Activated CD8-positive, alpha-beta memory T cell treated with anti-CD3 and anti-CD28 coated beads, Interleukin-2, amount 10 ng/mL, durations not matched to agents 7 days and 5 days (primary cell): ENCODE measurements at regions of chr1 and their contacts with region 1.

Region 1: DNA sequence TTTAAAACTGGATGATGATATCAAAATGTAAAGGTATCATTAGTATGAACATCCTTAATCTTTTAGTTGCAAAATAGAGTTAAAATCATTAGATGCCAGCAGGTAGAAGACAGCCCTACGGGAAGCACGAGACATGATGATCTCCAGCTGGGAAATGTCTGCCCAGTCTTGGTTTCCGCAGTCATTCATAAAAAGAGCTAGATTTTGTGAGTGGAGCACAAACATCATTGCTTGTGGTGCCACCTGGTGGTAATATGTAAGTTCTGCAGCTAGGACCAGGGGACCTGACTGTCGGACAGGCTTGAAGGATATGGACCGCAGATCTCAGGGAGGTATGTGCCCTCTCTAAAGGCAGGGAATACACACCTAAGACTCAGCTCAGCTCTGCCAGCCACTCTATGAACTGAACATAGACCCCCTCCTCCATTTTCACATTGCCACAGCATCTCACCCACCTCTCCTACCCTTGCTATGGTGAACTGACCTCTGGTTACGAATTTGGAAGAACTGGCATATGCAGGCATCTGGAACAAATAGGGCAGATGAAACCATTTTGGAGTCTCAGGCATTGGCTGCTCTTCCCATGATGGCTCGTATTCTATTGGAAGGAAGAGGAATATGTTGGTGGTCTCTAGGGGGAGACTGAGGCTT is 9.2 kb downstream of the FCMR start:
- DNase-seq: peak; percentile 79
- ATAC-seq: peak; percentile 53
- H3K4me3 Mint-ChIP-seq: no peak overlapping the region
- H3K27ac Mint-ChIP-seq: no peak overlapping the region
- H3K4me1 Mint-ChIP-seq: peaks cover 40% of the 10 kb centered on the region
- H3K27me3 Mint-ChIP-seq: peaks cover 4% of the 10 kb centered on the region

Region 2: GRCh38 chr1:206725109-206725963 is 187.2 kb before region 1 on chr1:
- CTCF ChIA-PET with region 1: interaction called, 65 read pairs
- DNase-seq: peak; percentile 77
- ATAC-seq: peak; percentile 65
- H3K4me3 Mint-ChIP-seq: no peak overlapping the region
- H3K27ac Mint-ChIP-seq: peak overlapping the region; percentile 24
- H3K4me1 Mint-ChIP-seq: peaks cover 59% of the 10 kb centered on the region
- H3K27me3 Mint-ChIP-seq: no peaks in the 10 kb centered on the region

Region 3: GRCh38 chr1:206808615-206809014 is 104.0 kb before region 1 on chr1:
- CTCF ChIA-PET with region 1: interaction called, 145 read pairs
- DNase-seq: peak; percentile 72
- ATAC-seq: peak; percentile 89
- H3K4me3 Mint-ChIP-seq: no peak overlapping the region
- H3K27ac Mint-ChIP-seq: peak overlapping the region; percentile 18
- H3K4me1 Mint-ChIP-seq: peaks cover 55% of the 10 kb centered on the region
- H3K27me3 Mint-ChIP-seq: peaks cover 2% of the 10 kb centered on the region

Region 4: GRCh38 chr1:206856674-206857464 is 55.7 kb before region 1 on chr1:
- CTCF ChIA-PET with region 1: interaction called, 16 read pairs
- DNase-seq: no peak
- ATAC-seq: peak; percentile 45
- H3K4me3 Mint-ChIP-seq: no peak overlapping the region
- H3K27ac Mint-ChIP-seq: no peak overlapping the region
- H3K4me1 Mint-ChIP-seq: peaks cover 23% of the 10 kb centered on the region
- H3K27me3 Mint-ChIP-seq: peaks cover 32% of the 10 kb centered on the region

Region 5: GRCh38 chr1:206930210-206930798 is 17.7 kb after region 1 on chr1:
- CTCF ChIA-PET with region 1: interaction called, 39 read pairs
- DNase-seq: peak; percentile 75
- ATAC-seq: peak; percentile 55
- H3K4me3 Mint-ChIP-seq: no peak overlapping the region
- H3K27ac Mint-ChIP-seq: peak overlapping the region; percentile 84
- H3K4me1 Mint-ChIP-seq: peaks cover 22% of the 10 kb centered on the region
- H3K27me3 Mint-ChIP-seq: no peaks in the 10 kb centered on the region

Region 6: DNA sequence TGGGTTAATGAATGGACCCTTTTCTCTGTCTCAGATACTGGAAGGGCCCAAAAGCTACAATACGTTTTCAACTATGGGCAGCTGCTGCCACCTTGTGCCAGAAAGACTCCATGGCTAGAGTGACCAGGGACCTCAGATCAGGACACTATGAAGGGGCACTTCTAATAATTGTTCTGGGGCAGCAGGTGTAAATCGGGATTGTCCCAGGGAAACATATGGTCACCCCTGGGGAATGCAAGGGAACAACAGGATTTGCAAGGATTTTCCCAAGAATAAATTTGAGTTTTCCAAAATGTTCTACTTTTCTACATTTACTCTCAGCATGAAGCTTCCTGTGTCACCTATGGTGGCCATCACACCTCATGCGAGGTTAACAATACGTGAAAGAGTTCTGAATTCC is 69.6 kb after region 1 on chr1:
- CTCF ChIA-PET with region 1: interaction called, 79 read pairs
- DNase-seq: peak; percentile 74
- ATAC-seq: peak; percentile 85
- H3K4me3 Mint-ChIP-seq: no peak overlapping the region
- H3K27ac Mint-ChIP-seq: no peak overlapping the region
- H3K4me1 Mint-ChIP-seq: no peaks in the 10 kb centered on the region
- H3K27me3 Mint-ChIP-seq: peaks cover 40% of the 10 kb centered on the region